ENCODE measurements at regions of chr1 and their contacts with region 1.

Region 1: DNA sequence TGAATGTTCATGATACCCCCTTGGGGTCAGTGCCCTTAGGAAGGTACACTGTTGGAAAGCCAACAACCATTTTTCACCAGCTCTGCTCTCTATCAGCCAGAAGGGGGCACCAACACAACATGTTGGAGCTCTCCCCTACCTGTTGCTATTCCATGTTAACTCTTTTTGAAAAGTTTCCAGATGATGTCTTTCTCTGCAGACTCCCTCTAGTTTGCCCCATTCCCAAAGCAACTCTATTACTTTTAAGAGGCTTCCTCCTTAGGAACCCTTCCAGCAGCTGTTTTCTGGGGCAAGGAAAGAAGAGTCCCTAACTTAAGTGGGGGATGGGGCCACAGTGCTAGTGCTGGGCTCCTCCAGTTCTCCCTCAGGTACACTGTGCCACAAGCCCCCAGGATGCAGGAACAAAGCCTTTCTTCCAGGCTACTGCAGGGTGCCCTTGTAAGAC is 22.9 kb upstream of the NDC1 start:
- DNase-seq: peak; percentile 53
- H3K4me3 Mint-ChIP-seq: no peak overlapping the region
- H3K27ac Mint-ChIP-seq: no peak overlapping the region
- H3K4me1 Mint-ChIP-seq: peaks cover 4% of the 10 kb centered on the region
- H3K27me3 Mint-ChIP-seq: no peaks in the 10 kb centered on the region

Region 2: GRCh38 chr1:53847980-53848379 is 13.0 kb before region 1 on chr1:
- CTCF ChIA-PET with region 1: interaction called, 31 read pairs
- POLR2A ChIA-PET with region 1: no interaction called
- DNase-seq: no peak
- H3K4me3 Mint-ChIP-seq: no peak overlapping the region
- H3K27ac Mint-ChIP-seq: no peak overlapping the region
- H3K4me1 Mint-ChIP-seq: no peaks in the 10 kb centered on the region
- H3K27me3 Mint-ChIP-seq: peaks cover 19% of the 10 kb centered on the region

Region 3: GRCh38 chr1:53878492-53879105 is 17.6 kb after region 1 on chr1:
- CTCF ChIA-PET with region 1: interaction called, 50 read pairs
- POLR2A ChIA-PET with region 1: no interaction called
- DNase-seq: no peak
- H3K4me3 Mint-ChIP-seq: no peak overlapping the region
- H3K27ac Mint-ChIP-seq: no peak overlapping the region
- H3K4me1 Mint-ChIP-seq: no peaks in the 10 kb centered on the region
- H3K27me3 Mint-ChIP-seq: no peaks in the 10 kb centered on the region

Region 4: GRCh38 chr1:53959664-53960250 is 98.8 kb after region 1 on chr1:
- CTCF ChIA-PET with region 1: interaction called, 122 read pairs
- POLR2A ChIA-PET with region 1: interaction called, 9 read pairs
- DNase-seq: no peak
- H3K4me3 Mint-ChIP-seq: no peak overlapping the region
- H3K27ac Mint-ChIP-seq: no peak overlapping the region
- H3K4me1 Mint-ChIP-seq: peaks cover 23% of the 10 kb centered on the region
- H3K27me3 Mint-ChIP-seq: no peaks in the 10 kb centered on the region

Region 5: DNA sequence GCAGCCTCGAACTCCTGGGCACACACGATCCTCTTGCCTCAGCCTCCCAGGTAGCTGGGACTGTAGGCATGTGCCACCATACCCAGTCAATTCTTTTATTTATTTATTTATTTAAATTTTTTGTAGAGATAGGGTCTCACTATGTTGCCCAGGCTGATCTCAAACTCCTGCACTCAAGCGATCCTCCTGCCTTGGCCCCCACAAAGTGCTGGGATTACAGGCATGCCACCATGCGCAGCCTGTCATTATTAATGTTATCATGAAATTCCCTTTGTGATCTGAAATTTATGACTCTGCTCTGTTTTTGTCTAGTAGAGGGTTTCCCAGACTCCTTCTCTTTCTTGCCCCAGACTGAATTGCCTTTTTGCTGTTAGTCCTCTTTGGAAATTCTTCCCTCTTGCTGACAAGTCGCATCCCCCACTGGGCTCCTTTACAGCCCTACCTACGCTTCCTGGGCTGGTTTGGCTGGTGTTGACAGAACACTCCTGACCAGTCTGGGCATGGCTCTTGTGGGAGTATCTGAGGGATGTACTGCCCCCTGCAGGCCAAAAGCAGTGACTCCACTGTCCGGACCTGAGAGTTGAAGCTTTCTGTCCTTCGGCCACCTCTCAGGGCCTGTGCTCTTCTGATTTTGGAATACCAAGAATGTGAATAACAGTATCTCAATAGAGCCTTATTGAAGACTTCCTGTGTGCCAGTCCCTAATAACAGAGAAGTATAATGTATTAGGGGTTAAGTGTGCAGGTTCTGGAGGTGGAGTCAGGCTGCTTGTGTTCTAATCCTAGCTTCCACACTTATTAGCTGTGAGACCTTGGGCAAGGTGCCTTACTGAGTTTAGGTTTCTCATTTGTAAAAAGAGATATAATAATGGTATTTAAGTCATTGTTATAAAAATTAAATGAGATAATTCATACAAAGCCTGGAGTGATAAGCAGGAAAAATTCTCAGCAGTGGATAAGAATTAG is 220.6 kb after region 1 on chr1:
- CTCF ChIA-PET with region 1: interaction called, 16 read pairs
- POLR2A ChIA-PET with region 1: no interaction called
- DNase-seq: peak; percentile 66
- H3K4me3 Mint-ChIP-seq: no peak overlapping the region
- H3K27ac Mint-ChIP-seq: no peak overlapping the region
- H3K4me1 Mint-ChIP-seq: peaks cover 5% of the 10 kb centered on the region
- H3K27me3 Mint-ChIP-seq: no peaks in the 10 kb centered on the region